G401 (cell line): ENCODE measurements at regions of chr17 and their contacts with region 1.

Region 1: GRCh38 chr17:185445-186138 is 4.1 kb upstream of the DOC2B start:
- DNase-seq: no peak

Region 2: DNA sequence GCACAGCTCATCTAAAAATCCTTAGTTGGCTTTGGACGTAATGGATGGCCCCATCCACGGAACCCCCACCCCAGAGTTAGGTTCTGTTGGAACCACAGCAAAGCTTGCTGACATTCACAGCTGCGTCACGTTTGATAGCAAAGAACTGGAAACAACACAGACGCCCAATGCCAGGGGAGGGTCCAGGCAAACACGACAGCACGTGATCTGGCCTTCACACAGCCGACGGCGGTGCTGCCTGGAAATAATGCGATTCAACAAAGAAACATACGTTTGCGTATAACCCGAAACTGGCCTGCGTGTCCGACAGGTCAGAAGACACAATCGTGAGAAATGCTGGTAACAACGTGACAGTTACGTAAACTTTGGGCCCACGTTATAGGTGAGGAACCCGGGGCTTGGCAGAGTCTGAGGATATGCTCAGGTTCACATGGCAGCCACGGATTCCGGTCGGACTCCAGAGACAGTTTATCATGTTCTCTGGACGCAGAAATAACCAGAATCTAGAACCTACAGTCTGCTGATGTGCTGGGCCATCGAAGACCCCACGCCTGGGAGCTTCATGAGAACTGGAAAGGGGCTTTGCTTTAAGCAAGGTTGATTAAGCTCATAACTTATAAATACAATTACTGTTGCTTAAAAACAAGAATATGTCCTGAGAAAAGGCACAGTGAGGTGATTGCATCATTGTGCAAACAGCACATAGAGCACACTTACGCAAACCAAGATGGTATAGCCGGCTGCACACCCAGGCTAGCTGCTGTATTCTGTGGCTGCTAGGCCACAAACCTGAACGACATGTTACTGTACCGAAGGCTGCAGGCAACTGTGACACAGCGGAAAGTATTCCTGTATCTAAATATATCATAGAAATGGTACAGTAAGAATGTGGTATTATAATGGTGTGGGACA is 96.7 kb after region 1 on chr17:
- in situ Hi-C with region 1: loop called (anchors 5 kb)
- DNase-seq: no peak

Region 3: GRCh38 chr17:333626-334396 is 148.2 kb after region 1 on chr17:
- in situ Hi-C with region 1: no loop called
- DNase-seq: peak; percentile 90